ENCODE measurements at regions of chr12 and their contacts with region 1.

Region 1: GRCh38 chr12:55926738-55927587 is 731 bp downstream of the PYM1 start:
- DNase-seq: peak; percentile 97
- ATAC-seq: peak; percentile 40
- H3K4me3 Mint-ChIP-seq: peak overlapping the region; percentile 100
- H3K27ac Mint-ChIP-seq: peak overlapping the region; percentile 95
- H3K4me1 Mint-ChIP-seq: peaks cover 48% of the 10 kb centered on the region
- H3K27me3 Mint-ChIP-seq: no peaks in the 10 kb centered on the region

Region 2: DNA sequence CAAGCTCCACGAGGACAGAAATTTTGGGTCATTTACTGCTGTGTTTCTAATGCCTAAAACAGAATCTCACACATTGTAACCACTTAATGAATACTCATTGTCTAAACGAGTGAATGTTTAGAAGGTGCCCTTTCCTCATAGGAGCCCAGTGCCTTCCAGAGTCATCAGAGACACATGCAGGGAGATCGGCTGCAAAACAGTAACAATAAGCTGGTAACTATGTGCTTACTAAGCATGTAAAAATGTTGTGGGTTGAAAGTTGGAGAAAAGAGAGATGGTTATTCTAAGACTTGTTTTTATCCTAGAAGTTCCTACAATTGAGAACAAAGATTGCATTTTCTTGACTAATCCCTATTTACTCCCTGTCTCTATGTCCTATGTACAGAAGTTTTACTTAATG is 949.8 kb before region 1 on chr12:
- CTCF ChIA-PET with region 1: no interaction called
- POLR2A ChIA-PET with region 1: no interaction called
- intact Hi-C with region 1: loop called in 1 of 2 experiments (anchors 1 kb)
- DNase-seq: no peak
- ATAC-seq: no peak
- H3K4me3 Mint-ChIP-seq: peak overlapping the region; percentile 78
- H3K27ac Mint-ChIP-seq: peak overlapping the region; percentile 82
- H3K4me1 Mint-ChIP-seq: peaks cover 88% of the 10 kb centered on the region
- H3K27me3 Mint-ChIP-seq: no peaks in the 10 kb centered on the region

Region 3: DNA sequence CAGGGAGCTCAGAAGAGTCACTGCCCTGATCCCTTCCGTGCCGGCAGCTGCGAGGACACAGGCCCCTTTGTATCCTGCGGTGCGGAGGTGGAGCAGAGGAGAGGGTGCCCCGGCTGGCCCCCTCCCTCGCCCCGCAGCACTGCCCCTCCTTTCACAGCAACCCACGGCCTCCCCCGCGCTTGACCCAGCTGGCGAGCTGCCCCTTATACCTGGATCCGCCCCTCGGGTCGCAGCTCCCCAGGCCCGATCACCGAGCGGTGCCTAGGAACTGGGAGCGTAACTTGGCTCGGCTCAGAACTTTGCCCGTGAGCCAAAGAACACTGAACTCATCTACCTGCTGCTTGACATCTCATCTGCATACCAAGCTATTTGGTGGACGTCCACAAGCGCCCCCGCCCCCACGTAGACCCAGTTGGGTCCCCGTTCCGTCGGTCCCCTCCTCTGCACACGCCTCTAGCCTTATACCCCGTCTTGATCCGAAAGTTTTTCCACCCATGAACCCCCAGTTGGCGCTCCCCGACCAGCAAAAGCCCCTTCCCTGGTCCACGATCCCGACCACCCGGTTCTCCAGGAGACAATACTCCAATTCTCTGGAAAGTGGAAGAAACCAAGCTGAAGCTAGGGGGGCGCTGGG is 96.9 kb before region 1 on chr12:
- CTCF ChIA-PET with region 1: interaction called, 7 read pairs
- POLR2A ChIA-PET with region 1: interaction called, 12 read pairs
- intact Hi-C with region 1: loop called (anchors 1 kb)
- DNase-seq: peak; percentile 52
- ATAC-seq: peak; percentile 37
- H3K4me3 Mint-ChIP-seq: peak overlapping the region; percentile 99
- H3K27ac Mint-ChIP-seq: peak overlapping the region; percentile 97
- H3K4me1 Mint-ChIP-seq: peaks cover 46% of the 10 kb centered on the region
- H3K27me3 Mint-ChIP-seq: no peaks in the 10 kb centered on the region

Region 4: GRCh38 chr12:55973598-55974307 is 46.8 kb after region 1 on chr12 and contains the start of gene RAB5B:
- CTCF ChIA-PET with region 1: interaction called, 6 read pairs
- POLR2A ChIA-PET with region 1: interaction called, 6 read pairs
- intact Hi-C with region 1: loop called (anchors 1 kb)
- DNase-seq: peak; percentile 98
- ATAC-seq: peak; percentile 93
- H3K4me3 Mint-ChIP-seq: no peak within 1 kb of the TSS
- H3K27ac Mint-ChIP-seq: no peak within 1 kb of the TSS
- H3K4me1 Mint-ChIP-seq: peaks cover 28% of the 10 kb centered on the region
- H3K27me3 Mint-ChIP-seq: no peaks in the 10 kb centered on the region
- total RNA-seq, gene RAB5B: 33.2 to 35.1 TPM

Region 5: DNA sequence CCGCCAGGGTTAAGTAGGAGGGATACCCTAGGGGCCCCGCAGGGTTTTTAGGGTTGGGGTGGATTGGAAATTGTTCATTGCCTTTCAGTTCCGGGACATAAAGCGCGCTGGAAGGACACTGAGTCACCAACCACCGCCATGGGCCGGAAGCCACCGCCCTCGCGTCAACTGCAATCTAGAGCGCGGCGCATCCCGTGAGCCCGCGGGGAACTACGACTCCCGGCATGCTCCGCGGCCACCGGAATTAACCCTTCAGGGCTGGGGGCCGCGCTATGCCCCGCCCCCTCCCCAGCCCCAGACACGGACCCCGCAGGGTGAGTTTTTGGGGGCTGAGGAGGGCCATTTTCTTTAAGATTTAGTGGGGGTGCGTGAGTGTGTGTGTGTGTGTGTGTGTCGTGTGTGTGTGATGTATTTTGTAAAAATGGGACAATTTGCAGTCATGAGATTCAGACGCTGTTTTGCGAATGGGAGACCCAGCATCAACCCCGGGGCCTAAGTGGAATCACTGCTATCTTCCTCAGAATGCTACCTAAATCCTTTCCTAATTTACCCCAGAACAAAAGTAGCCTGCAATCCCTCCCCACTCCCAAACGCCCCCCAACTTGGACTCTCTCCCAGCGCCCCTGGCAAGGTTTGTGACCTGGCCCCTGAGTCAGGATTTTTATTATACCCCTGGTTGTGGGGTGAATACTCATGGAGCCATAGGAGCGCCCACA is 225.5 kb after region 1 on chr12 and contains the start of gene MYL6B:
- CTCF ChIA-PET with region 1: no interaction called
- POLR2A ChIA-PET with region 1: no interaction called
- intact Hi-C with region 1: loop called in 1 of 2 experiments (anchors 2 kb)
- DNase-seq: peak; percentile 98
- ATAC-seq: peak; percentile 92
- H3K4me3 Mint-ChIP-seq: peak within 1 kb of the TSS; percentile 88
- H3K27ac Mint-ChIP-seq: peak within 1 kb of the TSS; percentile 99
- H3K4me1 Mint-ChIP-seq: peaks cover 29% of the 10 kb centered on the region
- H3K27me3 Mint-ChIP-seq: no peaks in the 10 kb centered on the region
- total RNA-seq, gene MYL6B: 76.3 to 79.3 TPM

Region 6: GRCh38 chr12:56636675-56637540 is 709.9 kb after region 1 on chr12:
- CTCF ChIA-PET with region 1: no interaction called
- POLR2A ChIA-PET with region 1: no interaction called
- intact Hi-C with region 1: loop called in 1 of 2 experiments (anchors 10 kb)
- DNase-seq: peak; percentile 98
- ATAC-seq: peak; percentile 73
- H3K4me3 Mint-ChIP-seq: peak overlapping the region; percentile 87
- H3K27ac Mint-ChIP-seq: peak overlapping the region; percentile 92
- H3K4me1 Mint-ChIP-seq: peaks cover 60% of the 10 kb centered on the region
- H3K27me3 Mint-ChIP-seq: no peaks in the 10 kb centered on the region

Region 7: GRCh38 chr12:57751788-57752667 is 1825.1 kb after region 1 on chr12 and contains the start of gene CDK4:
- CTCF ChIA-PET with region 1: no interaction called
- POLR2A ChIA-PET with region 1: no interaction called
- intact Hi-C with region 1: loop called in 1 of 2 experiments (anchors 5 kb)
- DNase-seq: peak; percentile 99
- ATAC-seq: peak; percentile 77
- H3K4me3 Mint-ChIP-seq: peak within 1 kb of the TSS; percentile 100
- H3K27ac Mint-ChIP-seq: peak within 1 kb of the TSS; percentile 99
- H3K4me1 Mint-ChIP-seq: peaks cover 56% of the 10 kb centered on the region
- H3K27me3 Mint-ChIP-seq: no peaks in the 10 kb centered on the region
- total RNA-seq, gene CDK4: 132 to 208 TPM